ENCODE measurements at regions of chr18 and their contacts with region 1.

Region 1: GRCh38 chr18:51153659-51154371 is 43.7 kb downstream of the MEX3C start:
- DNase-seq: peak; percentile 38
- H3K4me3 Mint-ChIP-seq: peak overlapping the region; percentile 82
- H3K27ac Mint-ChIP-seq: peak overlapping the region; percentile 96
- H3K4me1 Mint-ChIP-seq: peaks cover 48% of the 10 kb centered on the region
- H3K27me3 Mint-ChIP-seq: no peaks in the 10 kb centered on the region

Region 2: DNA sequence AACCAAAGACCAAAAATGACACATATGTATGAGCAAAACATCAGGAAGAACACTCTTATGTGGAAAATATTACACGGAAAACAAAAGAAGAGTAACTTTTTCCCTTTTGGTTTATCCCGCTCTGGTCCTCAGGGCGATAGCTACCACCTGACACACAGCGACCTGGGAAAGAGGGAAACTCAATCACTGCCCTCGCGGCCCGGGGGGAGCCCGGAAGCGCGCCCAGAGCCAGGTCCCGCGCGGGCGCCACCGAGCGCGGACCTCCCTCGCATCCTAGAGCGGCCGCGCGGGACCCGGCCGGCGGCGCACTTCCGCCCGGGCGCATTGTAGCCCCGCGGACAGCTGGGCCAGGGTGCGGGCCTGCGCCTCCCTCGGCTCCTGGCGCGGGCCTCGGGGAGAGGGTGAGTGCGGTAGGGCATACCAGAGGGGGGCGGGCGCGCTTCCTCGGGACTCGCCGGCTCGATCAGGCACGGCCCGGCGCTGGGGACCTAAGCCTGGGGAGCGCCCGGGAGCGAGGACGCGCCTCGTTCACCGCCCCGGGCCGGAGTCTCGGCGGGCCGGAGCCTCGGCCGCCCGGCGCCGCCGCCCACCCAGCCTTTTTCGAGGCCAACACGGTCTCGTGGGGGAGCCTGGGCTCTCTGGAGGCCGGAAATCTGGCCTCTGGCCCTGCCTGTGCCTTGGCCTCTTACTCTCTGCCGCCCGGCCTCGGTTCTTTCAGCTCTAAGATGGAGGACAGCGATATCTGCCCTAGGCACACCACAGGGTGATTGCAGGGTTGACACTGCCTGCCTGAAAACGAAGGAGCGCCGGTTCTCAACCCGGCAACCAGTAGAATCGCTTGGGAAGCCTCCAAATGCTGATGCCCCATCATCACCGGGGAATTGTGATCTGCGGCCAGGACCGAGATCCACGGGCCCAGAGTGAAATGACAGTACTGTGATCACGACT is 185.8 kb before region 1 on chr18 and contains the start of gene ELAC1:
- intact Hi-C with region 1: loop called (anchors 5 kb)
- DNase-seq: peak; percentile 60
- H3K4me3 Mint-ChIP-seq: peak within 1 kb of the TSS; percentile 96
- H3K27ac Mint-ChIP-seq: peak within 1 kb of the TSS; percentile 94
- H3K4me1 Mint-ChIP-seq: peaks cover 22% of the 10 kb centered on the region
- H3K27me3 Mint-ChIP-seq: peaks cover 2% of the 10 kb centered on the region
- total RNA-seq, gene ELAC1: 6.7 and 7.7 TPM in 2 replicates

Region 3: GRCh38 chr18:51029694-51030536 is 123.9 kb before region 1 on chr18 and contains the start of gene SMAD4:
- intact Hi-C with region 1: loop called (anchors 5 kb)
- DNase-seq: peak; percentile 97
- H3K4me3 Mint-ChIP-seq: peak within 1 kb of the TSS; percentile 99
- H3K27ac Mint-ChIP-seq: peak within 1 kb of the TSS; percentile 96
- H3K4me1 Mint-ChIP-seq: peaks cover 55% of the 10 kb centered on the region
- H3K27me3 Mint-ChIP-seq: no peaks in the 10 kb centered on the region
- total RNA-seq, gene SMAD4: 84.4 and 88.7 TPM in 2 replicates

Region 4: GRCh38 chr18:51171223-51171622 is 17.4 kb after region 1 on chr18:
- intact Hi-C with region 1: loop called (anchors 1 kb)
- DNase-seq: no peak
- H3K4me3 Mint-ChIP-seq: peak overlapping the region; percentile 58
- H3K27ac Mint-ChIP-seq: peak overlapping the region; percentile 98
- H3K4me1 Mint-ChIP-seq: peaks cover 62% of the 10 kb centered on the region
- H3K27me3 Mint-ChIP-seq: no peaks in the 10 kb centered on the region

Region 5: DNA sequence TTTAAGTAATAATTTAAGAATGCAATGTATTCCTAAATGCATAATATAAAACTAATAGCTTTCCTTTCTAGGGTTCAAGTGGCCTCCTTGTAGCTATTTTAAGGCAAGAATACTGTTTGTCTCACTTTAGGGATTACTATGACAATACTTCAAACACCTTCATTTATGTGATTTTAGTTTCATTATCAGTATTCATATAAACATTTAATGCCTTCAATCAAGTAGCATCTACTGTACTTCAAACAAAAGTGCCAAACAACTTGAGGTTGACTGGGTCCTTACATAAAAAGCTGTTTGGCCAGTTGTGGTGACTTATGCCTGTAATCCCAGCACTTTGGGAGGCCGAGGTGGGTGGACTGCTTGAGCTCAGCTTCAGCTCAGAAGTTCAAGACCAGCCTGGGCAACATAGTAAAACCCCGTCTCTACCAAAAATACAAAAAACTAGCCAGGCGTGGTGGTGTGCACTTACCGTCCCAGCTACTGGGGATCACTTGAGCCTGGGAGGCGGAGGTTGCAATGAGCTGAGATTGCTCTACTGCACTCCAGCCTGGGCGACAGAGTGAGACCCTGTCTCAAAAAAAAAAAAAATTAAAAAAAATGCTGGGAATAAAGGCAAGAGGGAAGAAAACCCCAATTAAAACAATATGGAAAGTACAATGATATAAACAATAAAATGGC is 34.3 kb after region 1 on chr18:
- intact Hi-C with region 1: loop called (anchors 1 kb)
- DNase-seq: no peak
- H3K4me3 Mint-ChIP-seq: peak overlapping the region; percentile 30
- H3K27ac Mint-ChIP-seq: no peak overlapping the region
- H3K4me1 Mint-ChIP-seq: peaks cover 72% of the 10 kb centered on the region
- H3K27me3 Mint-ChIP-seq: no peaks in the 10 kb centered on the region

Region 6: DNA sequence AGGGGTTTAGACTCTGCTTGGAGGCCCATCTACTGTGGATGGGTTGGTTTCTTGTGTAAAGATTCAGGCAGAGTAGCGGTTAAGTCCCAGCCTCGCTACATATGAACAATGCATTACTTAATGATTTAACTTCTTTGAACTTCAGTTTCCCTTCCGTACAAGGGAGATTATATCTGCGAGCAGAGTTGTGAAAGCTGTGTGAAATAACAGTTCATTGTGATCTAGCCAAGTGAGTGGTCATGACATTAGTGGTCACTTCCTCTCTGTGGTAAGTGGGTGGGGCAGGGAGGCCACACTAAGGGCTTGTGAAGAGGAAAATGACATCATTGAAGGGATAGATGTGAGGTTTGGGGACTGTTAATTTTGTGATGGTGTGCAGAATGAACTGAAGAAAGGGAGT is 57.7 kb after region 1 on chr18:
- intact Hi-C with region 1: loop called (anchors 1 kb)
- DNase-seq: peak; percentile 63
- H3K4me3 Mint-ChIP-seq: peak overlapping the region; percentile 7
- H3K27ac Mint-ChIP-seq: peak overlapping the region; percentile 62
- H3K4me1 Mint-ChIP-seq: peaks cover 14% of the 10 kb centered on the region
- H3K27me3 Mint-ChIP-seq: peaks cover 2% of the 10 kb centered on the region

Region 7: GRCh38 chr18:51235011-51235789 is 81.4 kb after region 1 on chr18:
- intact Hi-C with region 1: loop called (anchors 2 kb)
- DNase-seq: peak; percentile 11
- H3K4me3 Mint-ChIP-seq: peak overlapping the region; percentile 16
- H3K27ac Mint-ChIP-seq: peak overlapping the region; percentile 48
- H3K4me1 Mint-ChIP-seq: peaks cover 31% of the 10 kb centered on the region
- H3K27me3 Mint-ChIP-seq: no peaks in the 10 kb centered on the region

Region 8: GRCh38 chr18:52118684-52119083 is 964.9 kb after region 1 on chr18:
- intact Hi-C with region 1: no loop called
- DNase-seq: no peak
- H3K4me3 Mint-ChIP-seq: no peak overlapping the region
- H3K27ac Mint-ChIP-seq: no peak overlapping the region
- H3K4me1 Mint-ChIP-seq: no peaks in the 10 kb centered on the region
- H3K27me3 Mint-ChIP-seq: no peaks in the 10 kb centered on the region

Measured in activated T-helper 1 cell treated with anti-CD3 and anti-CD28 coated beads, Interleukin-12 subunit alpha, Interleukin-12 subunit beta, Interleukin-2, Interleukin-4 antibody, amounts not matched to agents 30 ng/mL and 10 ng/mL and 1 ng/mL, durations not matched to agents 14 hours and 24 hours and 36 hours (primary cell).